ENCODE measurements at regions of chr18 and their contacts with region 1.

Region 1: GRCh38 chr18:5180254-5180653 is 16.8 kb downstream of the AKAIN1 start:
- DNase-seq: no peak
- H3K4me3 ChIP-seq: no peak overlapping the region
- H3K27ac ChIP-seq: no peak overlapping the region
- H3K4me1 ChIP-seq: no peaks in the 10 kb centered on the region
- H3K27me3 ChIP-seq: no peaks in the 10 kb centered on the region
- CTCF ChIP-seq: no peak
- EP300 ChIP-seq: no peak
- POLR2A ChIP-seq: no peak

Region 2: GRCh38 chr18:5103693-5104092 is 76.6 kb before region 1 on chr18:
- intact Hi-C with region 1: loop called in 1 of 4 experiments (anchors 2 kb)
- DNase-seq: no peak
- H3K4me3 ChIP-seq: no peak overlapping the region
- H3K27ac ChIP-seq: no peak overlapping the region
- H3K4me1 ChIP-seq: no peaks in the 10 kb centered on the region
- H3K27me3 ChIP-seq: no peaks in the 10 kb centered on the region
- CTCF ChIP-seq: no peak
- EP300 ChIP-seq: no peak
- POLR2A ChIP-seq: no peak

Region 3: GRCh38 chr18:5142859-5143258 is 37.4 kb before region 1 on chr18:
- intact Hi-C with region 1: loop called in 1 of 4 experiments (anchors 5 kb)
- DNase-seq: no peak
- H3K4me3 ChIP-seq: no peak overlapping the region
- H3K27ac ChIP-seq: no peak overlapping the region
- H3K4me1 ChIP-seq: no peaks in the 10 kb centered on the region
- H3K27me3 ChIP-seq: no peaks in the 10 kb centered on the region
- CTCF ChIP-seq: no peak
- EP300 ChIP-seq: no peak
- POLR2A ChIP-seq: no peak

Region 4: DNA sequence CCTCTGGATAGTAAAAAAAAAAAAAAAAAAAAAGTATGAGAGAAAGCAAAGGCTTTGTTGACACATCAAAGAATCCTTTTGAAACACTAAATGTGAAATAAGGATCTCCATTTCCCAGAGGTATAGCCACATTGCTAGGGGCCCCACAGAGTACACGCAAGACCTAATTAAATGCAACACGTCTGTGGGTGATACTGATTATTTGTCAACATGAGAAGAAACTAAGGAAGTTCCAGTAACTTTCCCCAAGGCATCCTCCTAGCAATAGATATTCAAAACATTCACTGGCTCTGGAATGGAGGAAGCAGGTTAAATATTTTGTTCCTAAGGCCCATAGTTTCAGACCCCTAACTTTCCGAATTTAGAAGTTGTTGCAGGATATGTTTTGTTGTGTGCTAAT is 388.2 kb after region 1 on chr18:
- intact Hi-C with region 1: no loop called
- DNase-seq: no peak
- H3K4me3 ChIP-seq: no peak overlapping the region
- H3K27ac ChIP-seq: no peak overlapping the region
- H3K4me1 ChIP-seq: no peaks in the 10 kb centered on the region
- H3K27me3 ChIP-seq: no peaks in the 10 kb centered on the region
- CTCF ChIP-seq: no peak
- EP300 ChIP-seq: no peak
- POLR2A ChIP-seq: no peak